ENCODE measurements at regions of chr13 and their contacts with region 1.

Region 1: DNA sequence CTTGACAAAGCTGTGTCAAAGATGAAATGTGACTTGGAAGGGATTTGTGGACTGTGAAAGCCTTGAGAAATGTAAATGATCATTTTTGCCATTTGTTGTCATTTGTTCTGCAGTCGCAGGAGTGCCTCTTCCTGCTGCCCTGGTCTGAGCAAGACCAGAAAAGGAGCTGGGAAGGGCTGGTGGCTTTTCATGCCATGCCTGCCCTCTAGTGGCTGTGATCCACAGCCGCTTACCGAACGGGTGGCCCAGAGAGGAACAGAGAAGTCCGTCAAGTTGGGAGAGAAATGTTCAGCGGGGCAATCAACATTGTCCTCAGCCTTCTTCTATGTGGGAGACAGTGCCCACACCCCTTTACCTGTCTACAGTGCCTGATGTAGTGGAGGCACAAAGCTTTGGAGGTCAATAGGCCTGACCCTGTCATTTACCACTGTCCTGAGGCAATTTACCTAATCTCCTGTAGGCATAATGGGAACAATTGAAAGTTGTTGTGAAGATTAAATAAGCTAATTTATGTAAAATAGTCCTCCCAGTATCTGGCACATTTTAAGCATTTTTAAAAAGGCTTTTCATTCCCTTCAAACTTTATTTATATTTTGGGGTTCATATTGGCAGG is 224.4 kb downstream of the B3GLCT start:
- DNase-seq: peak; percentile 33
- H3K4me3 Mint-ChIP-seq: no peak overlapping the region
- H3K27ac Mint-ChIP-seq: no peak overlapping the region
- H3K4me1 Mint-ChIP-seq: no peaks in the 10 kb centered on the region
- H3K27me3 Mint-ChIP-seq: peaks cover 14% of the 10 kb centered on the region

Region 2: GRCh38 chr13:30186634-30187415 is 1237.4 kb before region 1 on chr13:
- intact Hi-C with region 1: no loop called
- DNase-seq: no peak
- H3K4me3 Mint-ChIP-seq: no peak overlapping the region
- H3K27ac Mint-ChIP-seq: no peak overlapping the region
- H3K4me1 Mint-ChIP-seq: no peaks in the 10 kb centered on the region
- H3K27me3 Mint-ChIP-seq: no peaks in the 10 kb centered on the region

Region 3: GRCh38 chr13:31236211-31236786 is 187.9 kb before region 1 on chr13:
- intact Hi-C with region 1: loop called (anchors 1 kb)
- DNase-seq: no peak
- H3K4me3 Mint-ChIP-seq: no peak overlapping the region
- H3K27ac Mint-ChIP-seq: no peak overlapping the region
- H3K4me1 Mint-ChIP-seq: no peaks in the 10 kb centered on the region
- H3K27me3 Mint-ChIP-seq: no peaks in the 10 kb centered on the region

Region 4: DNA sequence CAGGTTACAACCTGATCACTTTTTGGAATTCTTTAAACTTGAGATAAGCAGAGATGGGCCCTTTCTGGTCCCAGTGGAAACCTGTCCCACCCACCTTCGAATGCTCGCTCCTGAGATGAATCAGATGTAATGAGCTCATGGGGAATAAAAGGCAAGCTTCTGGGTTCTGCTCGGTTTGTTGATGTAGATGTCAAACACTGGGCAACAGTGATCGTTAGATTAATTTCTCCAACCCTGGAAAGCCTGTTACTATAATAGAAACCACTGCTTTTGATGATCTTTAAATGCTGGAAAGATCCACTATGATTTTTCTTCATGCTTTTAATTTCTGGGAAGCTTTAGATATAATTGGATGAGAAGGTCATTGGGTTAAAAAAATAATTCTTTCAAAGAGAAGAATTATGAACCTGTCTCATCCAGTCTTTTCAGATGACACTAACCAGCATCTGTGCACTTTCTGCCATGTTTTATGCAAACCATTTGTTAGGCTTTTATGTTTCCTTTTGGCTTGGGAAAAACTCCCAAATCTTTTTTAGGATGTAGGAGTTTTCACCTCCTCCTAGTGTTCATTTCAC is 175.2 kb before region 1 on chr13:
- intact Hi-C with region 1: no loop called
- DNase-seq: no peak
- H3K4me3 Mint-ChIP-seq: no peak overlapping the region
- H3K27ac Mint-ChIP-seq: no peak overlapping the region
- H3K4me1 Mint-ChIP-seq: no peaks in the 10 kb centered on the region
- H3K27me3 Mint-ChIP-seq: no peaks in the 10 kb centered on the region